ENCODE measurements at regions of chr10 and their contacts with region 1.

Region 1: GRCh38 chr10:77165445-77166208 is 472.0 kb downstream of the KCNMA1 start:
- DNase-seq: peak; percentile 72
- H3K4me3 Mint-ChIP-seq: peak overlapping the region; percentile 66
- H3K27ac Mint-ChIP-seq: peak overlapping the region; percentile 70
- H3K4me1 Mint-ChIP-seq: peaks cover 33% of the 10 kb centered on the region
- H3K27me3 Mint-ChIP-seq: peaks cover 7% of the 10 kb centered on the region
- CTCF ChIP-seq: peak; percentile 89

Region 2: DNA sequence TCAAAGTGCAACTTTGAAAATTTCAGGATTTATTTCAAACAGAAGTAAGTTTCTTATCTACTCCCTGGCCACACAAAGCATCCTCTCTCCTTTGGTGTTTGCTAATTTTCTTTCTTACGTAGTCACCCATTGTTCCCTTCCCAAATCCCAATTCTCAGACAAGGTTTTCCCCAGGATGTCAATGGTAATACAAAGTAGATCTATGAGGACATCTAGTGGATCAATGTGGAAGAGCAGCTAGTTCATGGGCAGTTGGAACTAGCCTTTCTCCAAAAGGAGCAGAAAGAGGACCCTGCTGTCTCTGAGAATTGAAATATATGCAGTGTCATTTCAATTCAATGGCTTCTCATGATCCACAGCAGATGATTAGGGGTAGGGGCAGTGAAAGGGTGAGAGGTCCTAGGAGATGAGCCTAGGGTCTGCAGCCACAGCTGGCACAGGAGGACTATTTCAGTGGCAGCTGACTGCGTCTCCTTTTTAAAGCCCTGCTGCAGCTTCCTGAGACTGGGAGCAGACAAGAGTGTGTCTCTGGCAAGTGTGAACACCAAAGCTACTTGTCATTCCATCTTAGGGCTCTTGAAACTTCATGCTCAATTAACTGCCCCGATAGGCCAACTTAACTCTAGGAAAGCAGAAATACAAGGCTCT is 160.6 kb before region 1 on chr10:
- CTCF ChIA-PET with region 1: no interaction called
- intact Hi-C with region 1: no loop called
- DNase-seq: peak; percentile 47
- H3K4me3 Mint-ChIP-seq: no peak overlapping the region
- H3K27ac Mint-ChIP-seq: no peak overlapping the region
- H3K4me1 Mint-ChIP-seq: no peaks in the 10 kb centered on the region
- H3K27me3 Mint-ChIP-seq: peaks cover 51% of the 10 kb centered on the region
- CTCF ChIP-seq: peak; percentile 70

Region 3: GRCh38 chr10:77494327-77494726 is 328.7 kb after region 1 on chr10:
- CTCF ChIA-PET with region 1: interaction called, 3 read pairs
- intact Hi-C with region 1: loop called (anchors 5 kb)
- DNase-seq: peak; percentile 40
- H3K4me3 Mint-ChIP-seq: no peak overlapping the region
- H3K27ac Mint-ChIP-seq: no peak overlapping the region
- H3K4me1 Mint-ChIP-seq: no peaks in the 10 kb centered on the region
- H3K27me3 Mint-ChIP-seq: peaks cover 65% of the 10 kb centered on the region
- CTCF ChIP-seq: no peak

Region 4: DNA sequence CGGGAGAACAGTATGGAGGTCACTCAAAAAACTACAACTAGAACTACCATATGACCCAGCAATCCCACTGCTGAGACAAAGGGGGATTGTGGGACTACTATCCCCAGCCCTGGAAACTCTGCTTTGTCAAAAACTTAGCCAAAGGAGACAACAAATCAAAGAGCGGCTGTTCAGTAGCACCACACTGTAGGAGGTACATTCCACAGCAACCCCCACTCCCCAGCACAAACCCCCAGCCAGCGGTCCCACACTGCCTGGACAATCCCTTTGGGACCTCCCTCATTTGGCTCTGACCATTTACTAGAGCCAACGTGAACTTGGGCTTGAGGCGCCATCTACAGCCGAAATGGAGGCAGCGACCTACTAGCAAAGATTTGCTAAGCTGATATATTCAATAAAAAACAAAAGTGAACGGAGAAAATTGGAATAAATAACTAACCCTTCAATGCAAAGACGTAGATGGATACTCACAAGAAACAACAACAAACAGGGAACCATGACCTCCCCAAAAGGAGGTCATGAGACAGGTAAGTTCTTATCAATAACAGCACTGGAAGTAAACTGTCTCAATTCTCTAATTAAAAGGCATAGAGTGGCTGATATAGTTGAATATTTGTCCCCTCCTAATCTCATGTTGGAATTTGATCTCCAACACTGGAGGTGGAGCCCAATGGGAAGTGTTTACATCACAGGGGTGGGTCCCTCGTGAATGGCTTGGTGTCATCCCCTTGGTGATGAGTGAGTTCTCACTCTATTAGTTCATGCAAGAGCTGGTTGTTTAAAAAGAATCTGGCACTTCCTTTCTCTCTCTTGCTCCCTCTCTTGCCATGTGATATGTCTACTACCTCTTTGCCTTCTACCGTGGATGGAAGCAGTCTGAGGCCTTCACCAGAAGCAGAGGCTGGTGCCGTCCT is 590.9 kb after region 1 on chr10:
- CTCF ChIA-PET with region 1: interaction called, 9 read pairs
- intact Hi-C with region 1: loop called (anchors 2 kb)
- DNase-seq: peak; percentile 64
- H3K4me3 Mint-ChIP-seq: no peak overlapping the region
- H3K27ac Mint-ChIP-seq: no peak overlapping the region
- H3K4me1 Mint-ChIP-seq: peaks cover 11% of the 10 kb centered on the region
- H3K27me3 Mint-ChIP-seq: no peaks in the 10 kb centered on the region
- CTCF ChIP-seq: peak; percentile 86

Region 5: GRCh38 chr10:78053211-78053868 is 887.7 kb after region 1 on chr10:
- CTCF ChIA-PET with region 1: no interaction called
- intact Hi-C with region 1: no loop called
- DNase-seq: no peak
- H3K4me3 Mint-ChIP-seq: no peak overlapping the region
- H3K27ac Mint-ChIP-seq: no peak overlapping the region
- H3K4me1 Mint-ChIP-seq: no peaks in the 10 kb centered on the region
- H3K27me3 Mint-ChIP-seq: peaks cover 30% of the 10 kb centered on the region
- CTCF ChIP-seq: no peak